Mammary epithelial cell (primary cell): ENCODE measurements at regions of chr1 and their contacts with region 1.

Region 1: GRCh38 chr1:218804014-218804785 is 369.5 kb upstream of the LYPLAL1 start:
- DNase-seq: peak; percentile 45
- H3K4me3 ChIP-seq: no peak overlapping the region
- H3K27ac ChIP-seq: peak overlapping the region; percentile 3
- H3K4me1 ChIP-seq: peaks cover 8% of the 10 kb centered on the region
- H3K27me3 ChIP-seq: no peaks in the 10 kb centered on the region
- CTCF ChIP-seq: no peak

Region 2: DNA sequence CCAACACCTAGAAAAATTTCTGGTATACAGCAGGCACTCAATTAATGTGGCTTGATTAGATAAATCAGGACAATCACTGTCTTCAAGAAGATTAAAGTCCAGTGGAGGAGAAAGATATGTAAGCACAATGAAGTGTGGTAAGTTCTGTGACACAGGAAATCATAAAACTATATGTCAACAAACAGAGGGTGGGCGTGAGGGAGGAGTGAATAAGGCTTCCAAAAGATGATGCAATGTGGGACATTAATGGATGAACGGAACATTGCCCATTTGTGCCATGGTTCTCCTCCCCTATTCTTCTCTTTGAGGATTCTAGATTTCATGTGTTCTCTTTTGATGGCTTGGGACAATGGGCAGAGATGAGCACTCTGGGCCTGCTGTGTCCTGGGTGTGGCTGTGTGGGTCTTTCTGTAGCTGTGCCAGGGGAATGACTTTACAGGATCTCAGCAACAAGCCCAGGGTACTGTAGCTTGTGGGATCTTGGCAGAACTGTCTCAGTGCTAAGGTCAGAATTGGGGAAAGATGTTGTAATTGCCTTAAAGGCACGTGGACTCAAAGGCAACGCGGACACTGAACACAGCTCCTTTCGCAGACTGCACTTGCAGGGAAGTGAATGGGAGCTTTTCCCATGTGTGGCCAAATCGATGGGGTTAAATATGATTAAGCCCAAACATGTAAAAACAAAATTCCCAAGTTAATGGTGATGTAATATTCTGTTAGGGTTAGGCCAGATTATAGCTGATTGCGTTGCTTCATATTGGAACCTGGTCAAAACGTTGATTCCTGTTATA is 92.1 kb before region 1 on chr1:
- CTCF ChIA-PET with region 1: no interaction called
- dilution Hi-C with region 1: no loop called
- in situ Hi-C with region 1: no loop called
- intact Hi-C with region 1: loop called (anchors 2 kb)
- DNase-seq: peak; percentile 81
- H3K4me3 ChIP-seq: no peak overlapping the region
- H3K27ac ChIP-seq: peak overlapping the region; percentile 87
- H3K4me1 ChIP-seq: peaks cover 34% of the 10 kb centered on the region
- H3K27me3 ChIP-seq: no peaks in the 10 kb centered on the region
- CTCF ChIP-seq: no peak

Region 3: GRCh38 chr1:219120624-219121544 is 316.7 kb after region 1 on chr1:
- CTCF ChIA-PET with region 1: no interaction called
- dilution Hi-C with region 1: no loop called
- in situ Hi-C with region 1: no loop called
- intact Hi-C with region 1: no loop called
- DNase-seq: peak; percentile 2
- H3K4me3 ChIP-seq: no peak overlapping the region
- H3K27ac ChIP-seq: no peak overlapping the region
- H3K4me1 ChIP-seq: no peaks in the 10 kb centered on the region
- H3K27me3 ChIP-seq: no peaks in the 10 kb centered on the region
- CTCF ChIP-seq: no peak